Posterior cingulate gyrus (tissue), 11 donors: ENCODE measurements at regions of chr11 and their contacts with region 1.

Region 1: DNA sequence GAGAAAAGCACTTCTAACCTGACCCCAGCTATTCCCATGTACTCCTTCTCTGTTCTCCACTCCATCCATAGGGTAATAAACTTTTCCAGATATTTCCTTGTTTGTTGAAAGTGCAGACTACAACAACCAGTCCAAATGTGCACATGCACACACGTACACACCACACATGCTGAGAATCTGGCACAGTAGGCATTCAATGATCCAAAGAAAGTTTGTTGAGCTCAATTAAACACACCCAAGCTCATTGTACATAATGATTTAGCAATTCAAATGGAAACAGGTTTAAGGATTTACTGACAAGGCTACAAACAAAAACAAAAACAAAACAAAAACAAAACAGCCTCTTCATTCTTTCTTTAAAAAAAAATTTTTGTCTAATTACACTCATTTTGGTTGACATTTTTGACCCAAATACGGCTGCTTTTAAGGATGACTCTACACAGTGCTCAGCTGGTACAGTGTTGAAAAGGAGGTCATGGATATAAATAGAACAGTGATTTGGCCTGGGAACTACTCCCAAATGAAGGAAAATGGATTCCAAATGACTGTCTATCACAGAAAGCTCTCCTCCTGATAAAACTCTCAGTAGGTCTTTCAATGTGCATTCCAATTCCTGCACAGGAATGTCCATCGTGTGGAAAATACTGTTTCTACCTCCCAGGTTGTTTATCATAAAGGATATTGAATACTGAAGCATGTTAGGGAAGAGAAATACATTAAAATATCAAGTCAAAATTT is 232.2 kb downstream of the GUCY1A2 start:
- DNase-seq: no peak

Region 2: GRCh38 chr11:106770489-106771085 is 15.5 kb before region 1 on chr11:
- intact Hi-C with region 1: loop called (anchors 1 kb)
- DNase-seq: no peak